ENCODE measurements at regions of chr10 and their contacts with region 1.

Region 1: GRCh38 chr10:11663763-11664555 is 52.5 kb upstream of the USP6NL start:
- DNase-seq: peak; percentile 72
- H3K4me3 ChIP-seq: peak overlapping the region; percentile 53
- H3K27ac ChIP-seq: peak overlapping the region; percentile 96
- H3K4me1 ChIP-seq: peaks cover 83% of the 10 kb centered on the region
- CTCF ChIP-seq: no peak

Region 2: DNA sequence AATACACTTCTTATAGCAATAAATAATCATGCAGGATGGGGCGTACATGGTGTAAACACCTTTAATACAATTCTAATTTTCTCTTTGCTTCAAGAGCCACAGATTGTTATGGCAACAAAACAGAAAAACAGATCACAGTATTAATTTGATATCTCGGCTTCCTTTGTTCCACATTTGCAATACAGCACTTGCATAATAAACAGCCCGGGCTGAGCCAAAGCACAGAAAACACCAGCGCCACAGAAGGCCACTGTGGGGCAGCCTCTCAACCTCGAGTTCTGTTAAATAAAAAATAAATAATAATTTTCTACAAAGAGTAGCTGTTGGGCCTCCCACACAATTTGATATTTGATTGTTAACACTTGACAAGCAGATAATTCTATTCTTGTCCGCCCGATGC is 308.4 kb before region 1 on chr10:
- CTCF ChIA-PET with region 1: no interaction called
- POLR2A ChIA-PET with region 1: no interaction called
- intact Hi-C with region 1: no loop called
- DNase-seq: no peak
- H3K4me3 ChIP-seq: no peak overlapping the region
- H3K27ac ChIP-seq: no peak overlapping the region
- H3K4me1 ChIP-seq: no peaks in the 10 kb centered on the region
- CTCF ChIP-seq: no peak

Region 3: DNA sequence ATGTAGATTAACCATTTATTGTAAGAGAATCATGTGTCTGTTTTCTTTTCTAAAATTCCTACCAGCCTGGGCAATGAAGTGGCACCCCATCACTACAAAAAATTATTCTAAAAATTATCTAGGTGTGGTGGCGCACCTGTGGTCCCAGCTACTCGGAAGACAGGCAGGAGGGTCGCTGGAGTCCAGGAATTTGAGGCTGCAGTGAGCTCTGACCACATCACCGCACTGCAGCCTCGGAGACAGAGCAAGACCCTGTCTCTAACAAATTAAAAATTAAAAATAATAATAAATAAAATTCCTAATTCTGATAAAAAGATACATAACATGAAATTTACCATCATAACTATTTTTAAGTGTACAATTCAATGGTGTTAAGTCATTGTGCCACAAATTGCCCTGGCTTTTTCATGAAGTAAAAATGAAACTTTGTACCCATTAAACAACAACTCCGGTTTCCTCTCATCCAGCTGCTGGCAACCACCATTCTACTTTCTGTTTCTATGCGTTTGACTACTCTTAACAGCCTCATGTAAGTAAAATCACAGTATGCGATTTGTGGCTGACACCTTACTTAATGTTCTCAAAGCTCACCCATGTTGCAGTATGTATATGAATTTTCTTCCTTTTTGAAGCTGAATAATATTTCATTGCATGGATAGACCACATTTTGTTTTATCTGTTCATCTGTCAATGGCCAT is 31.9 kb before region 1 on chr10:
- CTCF ChIA-PET with region 1: no interaction called
- POLR2A ChIA-PET with region 1: interaction called, 20 read pairs
- intact Hi-C with region 1: no loop called
- DNase-seq: peak; percentile 81
- H3K4me3 ChIP-seq: peak overlapping the region; percentile 49
- H3K27ac ChIP-seq: peak overlapping the region; percentile 75
- H3K4me1 ChIP-seq: peaks cover 43% of the 10 kb centered on the region
- CTCF ChIP-seq: no peak; the same call in 1 of the 2 replicates

Region 4: GRCh38 chr10:11638055-11638857 is 25.7 kb before region 1 on chr10:
- CTCF ChIA-PET with region 1: no interaction called
- POLR2A ChIA-PET with region 1: interaction called, 17 read pairs
- intact Hi-C with region 1: no loop called
- DNase-seq: peak; percentile 48
- H3K4me3 ChIP-seq: no peak overlapping the region
- H3K27ac ChIP-seq: no peak overlapping the region
- H3K4me1 ChIP-seq: peaks cover 34% of the 10 kb centered on the region
- CTCF ChIP-seq: no peak

Region 5: DNA sequence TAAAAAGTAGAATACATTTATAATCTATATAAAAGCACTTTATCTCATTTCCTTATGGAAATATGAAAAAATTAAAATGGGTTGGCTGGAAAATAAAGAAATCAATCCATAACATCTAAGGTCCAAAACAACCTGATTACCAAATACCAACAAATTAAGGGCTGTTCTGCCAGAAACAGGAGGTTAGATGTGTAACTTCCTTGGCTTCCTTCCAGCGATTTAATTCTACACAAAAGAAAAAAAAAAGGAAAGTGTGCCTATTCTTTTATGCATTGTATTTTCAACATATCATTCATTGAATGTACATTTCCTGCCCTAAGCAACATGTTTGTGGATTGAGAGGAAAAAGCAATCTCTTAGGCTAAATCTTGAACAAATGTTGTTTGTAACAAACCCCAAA is 16.3 kb before region 1 on chr10:
- CTCF ChIA-PET with region 1: no interaction called
- POLR2A ChIA-PET with region 1: interaction called, 23 read pairs
- intact Hi-C with region 1: no loop called
- DNase-seq: no peak
- H3K4me3 ChIP-seq: no peak overlapping the region
- H3K27ac ChIP-seq: no peak overlapping the region
- H3K4me1 ChIP-seq: peaks cover 25% of the 10 kb centered on the region
- CTCF ChIP-seq: no peak

Measured in OCI-LY7 (cell line).